ENCODE measurements at regions of chr3 and their contacts with region 1.

Region 1: GRCh38 chr3:126982471-126983175 is at the start of gene PLXNA1:
- DNase-seq: peak; percentile 75 to 87
- H3K4me3 ChIP-seq: peak within 1 kb of the TSS; percentile 87 to 97
- H3K27ac ChIP-seq: peak within 1 kb of the TSS; percentile 73 to 76
- H3K4me1 ChIP-seq: peaks cover 0 to 50% (median 41%) of the 10 kb centered on the region in 4 donors
- H3K27me3 ChIP-seq: peaks cover 0 to 2% of the 10 kb centered on the region in 2 donors
- CTCF ChIP-seq: peak; percentile 87 to 90

Region 2: DNA sequence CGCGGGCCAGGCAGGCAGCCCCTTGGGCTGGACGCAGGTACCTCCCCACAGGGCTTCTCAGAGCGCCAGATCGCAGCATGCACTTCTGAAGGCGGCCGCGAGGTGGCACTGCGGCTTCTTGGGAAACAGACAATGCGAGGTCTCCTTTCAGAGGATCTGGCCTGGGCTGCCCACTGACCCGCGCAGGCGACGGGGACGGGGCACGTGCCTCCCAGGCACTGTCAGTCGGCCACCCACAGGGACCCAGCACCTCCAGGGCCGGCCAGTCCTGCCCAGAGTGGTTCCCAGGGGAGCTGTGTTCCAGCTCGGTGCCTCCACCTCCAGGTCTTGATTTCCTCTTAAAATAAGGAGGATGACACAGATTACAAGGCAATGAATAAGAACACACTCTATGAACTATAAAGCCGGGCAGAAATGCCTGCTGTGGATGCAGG is 303.3 kb before region 1 on chr3:
- intact Hi-C with region 1: loop called (anchors 2 kb)
- DNase-seq: peak; percentile 82 to 86
- H3K4me3 ChIP-seq: no peak overlapping the region
- H3K27ac ChIP-seq: no peak overlapping the region
- H3K4me1 ChIP-seq: peaks cover 0 to 23% (median 17%) of the 10 kb centered on the region in 4 donors
- H3K27me3 ChIP-seq: peaks cover 0 to 11% of the 10 kb centered on the region in 2 donors
- CTCF ChIP-seq: peak; percentile 90 to 96

Region 3: DNA sequence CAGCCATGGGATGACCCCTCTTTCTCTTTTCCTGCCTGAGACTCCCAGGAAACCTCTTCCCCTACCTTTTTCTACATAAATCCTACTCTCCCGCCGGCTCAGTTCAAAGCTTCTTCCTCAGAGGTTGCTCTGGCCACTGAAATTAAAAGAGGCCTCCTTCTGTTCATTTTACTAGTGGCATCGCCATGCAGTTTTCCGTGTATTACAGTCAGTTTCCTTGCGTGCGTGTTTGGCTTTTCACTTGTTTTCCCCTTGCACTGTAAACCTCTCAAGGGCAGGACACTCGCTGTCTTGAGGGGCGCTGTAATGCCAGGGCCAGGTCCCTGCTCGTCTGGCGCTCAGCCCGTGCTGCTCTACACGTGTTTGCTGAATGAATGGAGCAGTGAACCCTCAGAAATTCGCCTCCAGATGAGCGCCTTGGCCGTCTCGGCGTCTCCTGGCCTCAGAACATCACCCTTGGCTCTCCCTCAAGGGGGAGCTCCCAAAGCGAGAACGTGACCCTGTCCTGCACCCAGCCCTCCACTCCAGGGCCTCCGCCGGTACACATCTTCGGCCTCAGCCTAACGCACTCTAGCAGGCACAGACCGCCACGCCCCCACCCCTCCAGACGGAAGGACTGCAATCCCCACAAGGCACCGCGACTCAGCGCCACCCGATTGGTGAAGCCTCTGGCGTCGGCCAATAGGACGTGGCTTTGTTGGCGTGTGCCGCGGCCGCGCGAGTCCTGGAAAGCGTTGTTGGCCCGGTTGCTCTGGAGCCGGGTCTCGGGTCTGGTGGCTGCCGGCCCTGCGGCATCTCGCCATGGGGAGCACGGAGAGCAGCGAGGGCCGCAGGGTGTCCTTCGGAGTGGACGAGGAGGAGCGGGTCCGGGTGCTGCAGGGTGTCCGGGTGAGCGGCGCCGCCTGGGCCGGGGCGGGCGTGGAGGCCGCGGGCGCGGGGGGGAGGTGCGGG is 278.8 kb before region 1 on chr3 and contains the start of gene CHCHD6:
- intact Hi-C with region 1: loop called (anchors 10 kb)
- DNase-seq: peak; percentile 94 to 95
- H3K4me3 ChIP-seq: peak within 1 kb of the TSS; percentile 71 to 99
- H3K27ac ChIP-seq: peak within 1 kb of the TSS; percentile 60 to 63
- H3K4me1 ChIP-seq: peaks cover 0 to 14% (median 13%) of the 10 kb centered on the region in 4 donors
- H3K27me3 ChIP-seq: peaks cover 0 to 8% of the 10 kb centered on the region in 2 donors
- CTCF ChIP-seq: peak in 1 of 2 experiments; percentile 21

Region 4: GRCh38 chr3:126752303-126752842 is 230.2 kb before region 1 on chr3:
- intact Hi-C with region 1: loop called (anchors 10 kb)
- DNase-seq: peak; percentile 70 to 86
- H3K4me3 ChIP-seq: no peak overlapping the region
- H3K27ac ChIP-seq: no peak overlapping the region
- H3K4me1 ChIP-seq: peaks cover 0 to 3% (median 0%) of the 10 kb centered on the region in 4 donors
- H3K27me3 ChIP-seq: no peaks in the 10 kb centered on the region
- CTCF ChIP-seq: peak; percentile 80 to 82

Region 5: DNA sequence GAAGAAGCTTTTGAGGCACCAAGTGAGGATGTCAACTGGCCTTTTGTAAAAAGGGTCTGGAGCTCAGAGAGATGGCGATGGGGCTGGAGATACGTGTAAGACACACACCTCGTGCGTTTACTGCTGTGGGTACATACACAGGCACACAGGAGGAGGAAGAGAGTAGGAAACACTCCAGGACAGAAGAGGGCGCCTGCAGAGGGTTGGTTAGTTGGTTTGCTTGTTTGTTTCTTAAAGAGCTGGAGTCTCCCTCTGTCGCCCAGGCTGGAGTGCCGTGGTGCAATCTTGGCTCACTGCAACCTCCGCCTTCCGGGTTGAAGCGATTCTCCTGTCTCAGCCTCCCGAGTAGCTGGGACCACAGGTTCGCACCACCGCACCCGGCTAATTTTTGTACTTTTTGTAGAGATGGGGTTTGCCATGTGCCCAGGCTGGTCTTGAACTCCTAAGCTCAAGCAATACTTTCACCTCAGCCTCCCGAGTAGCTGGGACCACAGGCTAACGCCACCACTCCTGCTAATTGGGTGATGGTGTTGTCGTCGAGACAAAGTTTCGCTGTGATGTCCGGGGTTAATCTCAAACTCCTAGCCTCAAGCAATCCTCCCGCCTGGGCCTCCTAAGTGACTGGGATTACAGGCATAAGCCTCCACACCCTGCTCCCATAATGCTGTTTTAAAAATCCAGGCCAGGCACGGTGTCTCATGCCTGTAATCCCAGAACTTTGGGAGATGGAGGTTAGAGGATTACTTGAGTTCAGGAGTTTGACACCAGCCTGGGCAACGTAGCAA is 306.5 kb after region 1 on chr3:
- intact Hi-C with region 1: no loop called
- DNase-seq: no peak
- H3K4me3 ChIP-seq: no peak overlapping the region
- H3K27ac ChIP-seq: no peak overlapping the region
- H3K4me1 ChIP-seq: no peaks in the 10 kb centered on the region
- H3K27me3 ChIP-seq: peaks cover 0 to 8% of the 10 kb centered on the region in 2 donors
- CTCF ChIP-seq: no peak

Measured in tibial artery (tissue), 4 donors.